ENCODE measurements at regions of chr14 and their contacts with region 1.

Region 1: GRCh38 chr14:60980811-60981632 is at the starts of genes SLC38A6 and TRMT5:
- DNase-seq: peak; percentile 93
- ATAC-seq: peak; percentile 97
- H3K4me3 Mint-ChIP-seq: no peak within 1 kb of the TSS
- H3K27ac Mint-ChIP-seq: no peak within 1 kb of the TSS
- H3K4me1 Mint-ChIP-seq: peaks cover 12% of the 10 kb centered on the region
- H3K27me3 Mint-ChIP-seq: no peaks in the 10 kb centered on the region
- CTCF ChIP-seq: no peak
- total RNA-seq, gene SLC38A6: 8.7 to 11.7 TPM (median 8.8 TPM) in 3 replicates
- total RNA-seq, gene TRMT5: 17.6 to 25.2 TPM (median 18.5 TPM) in 3 replicates

Region 2: GRCh38 chr14:60724137-60724619 is 256.8 kb before region 1 on chr14 and contains the start of gene SIX4:
- CTCF ChIA-PET with region 1: interaction called, 3 read pairs
- POLR2A ChIA-PET with region 1: interaction called, 12 read pairs
- DNase-seq: peak; percentile 86
- ATAC-seq: peak; percentile 84
- H3K4me3 Mint-ChIP-seq: peak within 1 kb of the TSS; percentile 96
- H3K27ac Mint-ChIP-seq: peak within 1 kb of the TSS; percentile 99
- H3K4me1 Mint-ChIP-seq: peaks cover 34% of the 10 kb centered on the region
- H3K27me3 Mint-ChIP-seq: no peaks in the 10 kb centered on the region
- CTCF ChIP-seq: no peak
- total RNA-seq, gene SIX4: 40.0 to 41.8 TPM (median 41.6 TPM) in 3 replicates

Region 3: DNA sequence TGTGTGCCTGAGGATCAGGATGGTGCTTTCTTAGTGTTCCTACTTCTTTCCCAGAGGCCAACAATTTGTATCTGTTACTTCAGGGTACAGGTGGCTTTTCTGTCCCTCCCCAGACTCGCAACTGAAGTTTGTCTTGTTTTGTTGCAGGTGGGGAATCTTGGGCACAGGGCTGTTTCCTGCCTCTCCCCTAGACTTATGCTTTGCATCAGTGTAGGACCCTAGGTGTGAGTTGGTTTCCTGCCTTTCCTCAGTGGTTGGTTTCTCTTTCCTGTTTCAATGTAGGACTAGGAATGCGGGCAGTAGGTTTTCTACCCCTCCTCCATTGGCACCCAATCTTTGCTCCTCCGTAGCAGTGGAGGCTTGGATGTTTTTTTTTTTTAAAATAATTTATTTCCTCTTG is 87.1 kb before region 1 on chr14:
- CTCF ChIA-PET with region 1: no interaction called
- POLR2A ChIA-PET with region 1: no interaction called
- DNase-seq: no peak
- ATAC-seq: peak; percentile 82
- H3K4me3 Mint-ChIP-seq: no peak overlapping the region
- H3K27ac Mint-ChIP-seq: peak overlapping the region; percentile 77
- H3K4me1 Mint-ChIP-seq: peaks cover 19% of the 10 kb centered on the region
- H3K27me3 Mint-ChIP-seq: no peaks in the 10 kb centered on the region
- CTCF ChIP-seq: no peak

Region 4: GRCh38 chr14:61025251-61026223 is 44.5 kb after region 1 on chr14:
- CTCF ChIA-PET with region 1: no interaction called
- POLR2A ChIA-PET with region 1: no interaction called
- DNase-seq: peak; percentile 47
- ATAC-seq: peak; percentile 59; the same call in 1 of the 2 replicates
- H3K4me3 Mint-ChIP-seq: no peak overlapping the region
- H3K27ac Mint-ChIP-seq: no peak overlapping the region
- H3K4me1 Mint-ChIP-seq: peaks cover 15% of the 10 kb centered on the region
- H3K27me3 Mint-ChIP-seq: no peaks in the 10 kb centered on the region
- CTCF ChIP-seq: peak; percentile 51

Region 5: GRCh38 chr14:61051051-61051450 is 70.0 kb after region 1 on chr14:
- CTCF ChIA-PET with region 1: no interaction called
- POLR2A ChIA-PET with region 1: no interaction called
- DNase-seq: no peak
- ATAC-seq: no peak
- H3K4me3 Mint-ChIP-seq: no peak overlapping the region
- H3K27ac Mint-ChIP-seq: no peak overlapping the region
- H3K4me1 Mint-ChIP-seq: peaks cover 12% of the 10 kb centered on the region
- H3K27me3 Mint-ChIP-seq: no peaks in the 10 kb centered on the region
- CTCF ChIP-seq: no peak

Region 6: GRCh38 chr14:61064210-61064609 is 83.2 kb after region 1 on chr14:
- CTCF ChIA-PET with region 1: no interaction called
- POLR2A ChIA-PET with region 1: no interaction called
- DNase-seq: no peak
- ATAC-seq: no peak
- H3K4me3 Mint-ChIP-seq: no peak overlapping the region
- H3K27ac Mint-ChIP-seq: no peak overlapping the region
- H3K4me1 Mint-ChIP-seq: peaks cover 21% of the 10 kb centered on the region
- H3K27me3 Mint-ChIP-seq: no peaks in the 10 kb centered on the region
- CTCF ChIP-seq: no peak

Measured in WTC11 (cell line).